CD8-positive, alpha-beta T cell (primary cell): ENCODE measurements at regions of chr17 and their contacts with region 1.

Region 1: DNA sequence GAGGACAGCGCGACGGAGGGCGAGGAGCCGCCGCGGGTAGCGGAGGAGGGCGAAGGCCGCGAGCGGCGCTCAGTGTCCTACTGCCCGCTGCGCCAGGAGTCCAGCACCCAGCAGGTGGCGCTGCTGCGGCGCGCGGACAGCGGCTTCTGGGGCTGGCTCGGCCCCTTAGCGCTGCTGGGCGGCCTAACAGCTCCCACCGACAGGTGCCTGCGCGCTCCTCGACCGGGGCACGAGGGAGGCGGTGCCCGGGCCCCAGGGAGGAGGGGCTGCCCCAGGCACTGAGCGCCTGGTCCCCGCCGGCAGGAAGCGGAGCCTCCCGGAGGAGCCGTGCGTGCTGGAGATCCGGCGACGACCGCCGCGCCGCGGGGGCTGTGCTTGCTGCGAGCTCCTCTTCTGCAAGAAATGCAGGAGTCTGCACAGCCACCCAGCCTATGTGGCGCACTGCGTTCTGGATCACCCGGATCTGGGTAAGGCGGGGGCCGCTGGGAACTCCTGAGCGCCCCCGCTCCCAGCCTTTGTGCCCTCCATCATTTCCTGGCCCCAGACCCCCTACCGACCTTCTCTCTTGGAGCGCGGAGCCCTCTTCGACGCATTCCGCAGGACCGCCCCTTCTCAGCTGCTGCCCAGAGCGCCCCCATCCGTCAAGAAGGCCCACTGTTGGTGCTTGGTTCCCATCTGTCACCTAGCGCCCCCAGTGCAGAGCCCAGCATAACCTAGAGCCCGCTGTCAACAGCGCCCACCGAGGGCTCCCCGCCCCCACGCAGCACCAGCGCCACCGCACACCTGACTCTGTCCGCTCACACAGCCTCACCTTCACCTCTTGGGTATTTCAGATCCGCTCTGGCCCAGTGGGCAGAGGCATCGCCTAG is 3.7 kb downstream of the C17orf50 start:
- DNase-seq: peak; percentile 67 to 95 (median 86)
- ATAC-seq: peak; percentile 89
- H3K4me3 ChIP-seq: peak overlapping the region; percentile 70 to 86
- H3K4me3 Mint-ChIP-seq: peak overlapping the region; percentile 91
- H3K27ac ChIP-seq: peak overlapping the region; percentile 16 to 65
- H3K27ac Mint-ChIP-seq: peak overlapping the region; percentile 87
- H3K4me1 ChIP-seq: peaks cover 8% of the 10 kb centered on the region
- H3K4me1 Mint-ChIP-seq: peaks cover 10% of the 10 kb centered on the region
- H3K27me3 ChIP-seq: no peaks in the 10 kb centered on the region
- H3K27me3 Mint-ChIP-seq: no peaks in the 10 kb centered on the region
- CTCF ChIP-seq: peak; percentile 58

Region 2: GRCh38 chr17:35612924-35613521 is 151.3 kb before region 1 on chr17:
- CTCF ChIA-PET with region 1: interaction called, 12 read pairs
- POLR2A ChIA-PET with region 1: no interaction called
- intact Hi-C with region 1: no loop called
- DNase-seq: peak in 5 of 9 experiments; percentile 28 to 49 (median 34)
- ATAC-seq: peak; percentile 38
- H3K4me3 ChIP-seq: no peak overlapping the region
- H3K4me3 Mint-ChIP-seq: no peak overlapping the region
- H3K27ac ChIP-seq: no peak overlapping the region
- H3K27ac Mint-ChIP-seq: no peak overlapping the region
- H3K4me1 ChIP-seq: no peaks in the 10 kb centered on the region
- H3K4me1 Mint-ChIP-seq: peaks cover 5% of the 10 kb centered on the region
- H3K27me3 ChIP-seq: no peaks in the 10 kb centered on the region
- H3K27me3 Mint-ChIP-seq: no peaks in the 10 kb centered on the region
- CTCF ChIP-seq: peak; percentile 55

Region 3: DNA sequence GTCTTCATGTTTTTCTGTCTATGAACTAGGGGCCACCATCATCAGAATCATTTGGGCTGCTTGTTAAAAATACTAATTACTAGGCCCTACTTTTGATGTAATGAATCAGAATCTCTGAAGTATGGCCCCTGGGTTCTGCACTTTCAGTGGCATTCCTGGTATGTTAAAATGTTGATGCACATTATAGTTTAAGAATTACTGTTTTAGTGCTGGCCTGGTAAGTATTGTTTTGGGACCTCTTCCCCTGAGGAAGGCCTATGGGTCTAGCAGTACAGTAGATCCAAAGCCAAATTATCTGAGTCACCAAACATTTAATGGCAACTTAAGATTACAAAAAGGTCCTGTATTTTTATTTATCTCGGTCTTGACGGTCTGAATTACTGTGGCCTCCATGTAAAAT is 118.4 kb before region 1 on chr17:
- CTCF ChIA-PET with region 1: no interaction called
- POLR2A ChIA-PET with region 1: no interaction called
- intact Hi-C with region 1: no loop called
- DNase-seq: no peak
- ATAC-seq: no peak
- H3K4me3 ChIP-seq: no peak overlapping the region
- H3K4me3 Mint-ChIP-seq: no peak overlapping the region
- H3K27ac ChIP-seq: no peak overlapping the region
- H3K27ac Mint-ChIP-seq: no peak overlapping the region
- H3K4me1 ChIP-seq: no peaks in the 10 kb centered on the region
- H3K4me1 Mint-ChIP-seq: peaks cover 1% of the 10 kb centered on the region
- H3K27me3 ChIP-seq: no peaks in the 10 kb centered on the region
- H3K27me3 Mint-ChIP-seq: no peaks in the 10 kb centered on the region
- CTCF ChIP-seq: no peak

Region 4: DNA sequence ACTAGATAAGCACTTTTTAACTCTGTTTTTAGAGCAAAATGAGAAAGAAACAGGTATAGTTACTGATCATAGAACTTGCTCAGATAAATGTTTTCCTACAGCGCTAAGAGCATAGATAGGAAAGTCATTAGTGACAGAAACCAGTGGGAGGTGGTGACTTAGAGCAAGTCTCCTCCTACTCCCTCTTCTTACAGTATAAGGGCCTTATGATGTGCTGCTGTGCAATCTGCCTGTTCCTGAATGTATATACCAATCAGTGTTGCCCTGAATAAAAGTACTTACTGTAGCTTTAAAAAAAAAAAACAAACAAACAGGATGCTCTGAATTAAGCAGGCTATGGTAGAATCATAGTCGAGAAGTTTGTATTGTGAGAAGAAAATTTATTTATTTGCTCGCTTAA is 56.2 kb before region 1 on chr17:
- CTCF ChIA-PET with region 1: no interaction called
- POLR2A ChIA-PET with region 1: no interaction called
- intact Hi-C with region 1: no loop called
- DNase-seq: no peak
- ATAC-seq: no peak
- H3K4me3 ChIP-seq: no peak overlapping the region
- H3K4me3 Mint-ChIP-seq: no peak overlapping the region
- H3K27ac ChIP-seq: no peak overlapping the region
- H3K27ac Mint-ChIP-seq: no peak overlapping the region
- H3K4me1 ChIP-seq: peaks cover 21% of the 10 kb centered on the region
- H3K4me1 Mint-ChIP-seq: peaks cover 46% of the 10 kb centered on the region
- H3K27me3 ChIP-seq: no peaks in the 10 kb centered on the region
- H3K27me3 Mint-ChIP-seq: no peaks in the 10 kb centered on the region
- CTCF ChIP-seq: no peak

Region 5: DNA sequence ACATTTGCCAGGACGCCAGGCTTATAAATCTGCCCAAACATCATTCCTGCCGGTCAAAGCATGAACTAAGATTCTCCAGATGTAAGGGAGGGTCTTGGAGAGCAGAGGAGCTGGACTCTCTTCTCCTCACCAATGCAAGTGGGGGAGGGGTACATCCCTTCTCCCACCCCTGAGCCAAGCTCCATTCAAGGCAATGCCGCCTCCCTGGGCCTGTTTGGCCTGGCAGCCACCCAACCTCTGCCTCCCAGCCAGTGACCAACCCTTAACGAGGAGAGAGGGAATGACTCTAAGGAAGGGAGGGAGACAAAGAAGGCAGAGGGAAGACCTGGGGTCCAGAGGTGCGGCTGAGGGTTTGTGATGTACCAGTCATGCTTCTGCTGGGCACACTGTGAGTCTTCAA is 10.1 kb after region 1 on chr17:
- CTCF ChIA-PET with region 1: interaction called, 36 read pairs
- POLR2A ChIA-PET with region 1: interaction called, 3 read pairs
- intact Hi-C with region 1: no loop called
- DNase-seq: no peak
- ATAC-seq: no peak
- H3K4me3 ChIP-seq: no peak overlapping the region
- H3K4me3 Mint-ChIP-seq: no peak overlapping the region
- H3K27ac ChIP-seq: no peak overlapping the region
- H3K27ac Mint-ChIP-seq: no peak overlapping the region
- H3K4me1 ChIP-seq: no peaks in the 10 kb centered on the region
- H3K4me1 Mint-ChIP-seq: peaks cover 3% of the 10 kb centered on the region
- H3K27me3 ChIP-seq: no peaks in the 10 kb centered on the region
- H3K27me3 Mint-ChIP-seq: peaks cover 9% of the 10 kb centered on the region
- CTCF ChIP-seq: no peak

Region 6: GRCh38 chr17:35794988-35795824 is 30.8 kb after region 1 on chr17 and contains the start of gene MMP28:
- CTCF ChIA-PET with region 1: interaction called, 67 read pairs
- POLR2A ChIA-PET with region 1: interaction called, 5 read pairs
- intact Hi-C with region 1: no loop called
- DNase-seq: peak in 7 of 9 experiments; percentile 26 to 67 (median 46)
- ATAC-seq: peak; percentile 74
- H3K4me3 ChIP-seq: peak within 1 kb of the TSS; percentile 49 to 55
- H3K4me3 Mint-ChIP-seq: peak within 1 kb of the TSS; percentile 83
- H3K27ac ChIP-seq: no peak within 1 kb of the TSS
- H3K27ac Mint-ChIP-seq: no peak within 1 kb of the TSS
- H3K4me1 ChIP-seq: peaks cover 23% of the 10 kb centered on the region
- H3K4me1 Mint-ChIP-seq: peaks cover 41% of the 10 kb centered on the region
- H3K27me3 ChIP-seq: peaks cover 4 to 15% of the 10 kb centered on the region in 2 experiments
- H3K27me3 Mint-ChIP-seq: peaks cover 25% of the 10 kb centered on the region
- CTCF ChIP-seq: no peak
- total RNA-seq, gene MMP28: 5.4 to 6.5 TPM

Region 7: DNA sequence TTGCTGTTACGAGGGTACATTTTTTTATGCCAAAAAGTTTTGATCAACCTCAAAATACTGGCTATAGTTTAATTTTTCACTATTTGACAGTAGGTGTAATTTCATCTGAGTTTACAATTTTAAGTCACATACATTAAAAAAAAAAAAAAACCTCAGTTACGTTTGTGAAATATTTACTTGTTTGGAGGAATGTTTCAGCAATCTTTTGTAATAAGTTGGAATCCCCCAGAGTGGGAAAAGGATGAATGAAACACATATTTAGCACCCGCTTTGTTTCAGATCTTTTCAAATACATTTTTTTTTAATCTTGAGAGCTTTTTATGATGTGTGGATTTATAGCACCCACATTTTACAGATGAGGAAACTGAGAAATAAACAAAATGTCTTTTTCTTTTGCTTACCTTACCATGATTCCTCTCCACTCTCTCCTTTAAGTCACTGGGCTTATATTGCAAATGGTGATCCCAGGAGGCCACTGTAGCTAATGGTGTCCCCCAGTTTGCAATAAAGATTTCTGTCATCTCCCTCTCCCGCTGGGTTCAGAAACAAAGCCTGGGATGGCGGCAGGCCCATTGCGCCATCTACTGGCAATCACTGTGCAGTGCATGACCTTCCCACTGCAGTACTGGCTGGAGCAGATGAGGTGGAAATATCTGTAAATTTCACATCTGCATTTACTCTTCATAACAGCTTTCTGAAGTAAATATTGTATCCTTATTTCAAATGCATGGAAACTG is 384.4 kb after region 1 on chr17:
- CTCF ChIA-PET with region 1: interaction called, 7 read pairs
- POLR2A ChIA-PET with region 1: no interaction called
- intact Hi-C with region 1: loop called in 1 of 2 experiments (anchors 10 kb)
- DNase-seq: peak; percentile 43 to 84 (median 66)
- ATAC-seq: peak; percentile 85
- H3K4me3 ChIP-seq: peak overlapping the region in 1 of 2 experiments; percentile 23
- H3K4me3 Mint-ChIP-seq: peak overlapping the region; percentile 2
- H3K27ac ChIP-seq: no peak overlapping the region
- H3K27ac Mint-ChIP-seq: no peak overlapping the region
- H3K4me1 ChIP-seq: no peaks in the 10 kb centered on the region
- H3K4me1 Mint-ChIP-seq: peaks cover 5% of the 10 kb centered on the region
- H3K27me3 ChIP-seq: no peaks in the 10 kb centered on the region
- H3K27me3 Mint-ChIP-seq: peaks cover 15% of the 10 kb centered on the region
- CTCF ChIP-seq: peak; percentile 100

Region 8: DNA sequence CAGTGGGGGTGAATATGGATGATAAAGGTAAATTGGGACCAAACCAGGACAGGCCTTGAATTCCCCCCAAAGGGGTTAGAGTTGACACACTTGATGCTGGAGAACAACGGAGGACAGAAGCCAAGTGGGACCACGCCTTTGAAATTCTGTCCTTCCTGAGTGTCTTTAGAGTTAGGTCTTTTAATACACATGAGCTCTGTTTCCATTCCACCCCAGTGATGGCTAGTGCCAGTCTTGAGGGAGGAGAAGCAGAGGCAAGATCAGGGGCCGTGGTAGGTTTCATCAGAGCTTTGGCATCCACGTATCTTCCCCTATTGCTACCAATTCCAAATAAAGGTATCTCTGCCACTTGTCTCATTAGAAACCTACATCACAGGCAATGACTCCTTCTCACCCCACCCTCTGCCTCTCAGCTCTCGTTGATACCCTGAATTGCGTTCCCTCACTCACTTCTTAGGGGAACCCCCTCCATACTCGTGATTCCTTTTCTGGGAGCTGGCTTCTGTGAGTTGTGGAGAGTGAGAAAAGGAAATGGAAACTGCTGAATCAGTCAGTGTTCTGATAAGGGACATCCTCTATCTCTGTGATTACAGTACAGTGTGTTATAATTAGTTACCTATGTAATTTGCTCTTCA is 434.6 kb after region 1 on chr17:
- CTCF ChIA-PET with region 1: no interaction called
- POLR2A ChIA-PET with region 1: no interaction called
- intact Hi-C with region 1: no loop called
- DNase-seq: peak in 2 of 9 experiments; percentile 62 to 91
- ATAC-seq: peak; percentile 73
- H3K4me3 ChIP-seq: no peak overlapping the region
- H3K4me3 Mint-ChIP-seq: peak overlapping the region; percentile 0
- H3K27ac ChIP-seq: peak overlapping the region in 1 of 2 experiments; percentile 84
- H3K27ac Mint-ChIP-seq: peak overlapping the region; percentile 86
- H3K4me1 ChIP-seq: peaks cover 15% of the 10 kb centered on the region
- H3K4me1 Mint-ChIP-seq: peaks cover 72% of the 10 kb centered on the region
- H3K27me3 ChIP-seq: no peaks in the 10 kb centered on the region
- H3K27me3 Mint-ChIP-seq: no peaks in the 10 kb centered on the region
- CTCF ChIP-seq: no peak

Region 9: GRCh38 chr17:36994438-36994837 is 1230.1 kb after region 1 on chr17:
- CTCF ChIA-PET with region 1: no interaction called
- POLR2A ChIA-PET with region 1: no interaction called
- intact Hi-C with region 1: no loop called
- DNase-seq: no peak
- ATAC-seq: no peak
- H3K4me3 ChIP-seq: no peak overlapping the region
- H3K4me3 Mint-ChIP-seq: no peak overlapping the region
- H3K27ac ChIP-seq: no peak overlapping the region
- H3K27ac Mint-ChIP-seq: no peak overlapping the region
- H3K4me1 ChIP-seq: no peaks in the 10 kb centered on the region
- H3K4me1 Mint-ChIP-seq: peaks cover under 1% of the 10 kb centered on the region
- H3K27me3 ChIP-seq: no peaks in the 10 kb centered on the region
- H3K27me3 Mint-ChIP-seq: no peaks in the 10 kb centered on the region
- CTCF ChIP-seq: no peak